Activated CD4-positive, alpha-beta memory T cell treated with anti-CD3 and anti-CD28 coated beads, Interleukin-2, amount 10 ng/mL, durations not matched to agents 7 days and 5 days (primary cell): ENCODE measurements at regions of chr2 and their contacts with region 1.

Region 1: DNA sequence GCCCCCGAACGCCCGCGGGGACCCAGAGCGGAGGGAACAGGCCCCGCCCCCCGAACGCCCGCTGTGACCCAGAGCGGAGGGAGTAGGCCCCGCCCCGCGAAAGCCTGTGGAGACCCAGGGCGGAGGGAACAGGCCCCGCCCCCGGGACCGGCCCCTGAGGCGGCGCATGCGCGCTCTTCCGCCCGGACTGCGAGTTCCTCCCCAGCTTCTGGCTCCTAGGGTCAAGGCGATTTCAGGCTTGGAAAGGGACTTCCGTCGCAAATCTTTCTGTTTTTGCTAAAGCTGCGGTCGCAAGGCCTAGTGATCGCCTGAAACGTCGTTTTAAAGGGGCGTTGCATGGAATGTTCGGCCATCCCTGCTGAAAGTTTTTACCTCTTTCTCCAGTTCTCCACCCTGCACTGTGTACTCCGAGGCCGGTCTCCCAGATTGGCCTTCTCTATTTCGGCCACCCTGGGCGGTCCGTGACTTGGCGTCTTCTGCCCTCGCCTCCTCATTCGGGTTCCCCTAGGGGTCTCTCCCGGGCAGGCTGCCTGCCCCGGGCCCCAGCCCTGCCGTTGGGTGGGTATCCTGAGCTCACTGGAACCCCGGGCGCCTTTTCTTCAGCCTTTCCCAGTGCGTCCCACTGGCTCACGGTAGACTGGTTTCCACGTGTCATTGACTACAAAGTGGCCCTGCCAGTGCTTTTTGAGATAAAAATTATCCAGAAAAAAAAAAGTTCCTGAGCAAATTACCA is 372 bp upstream of the WDSUB1 start:
- DNase-seq: peak; percentile 97
- H3K4me3 Mint-ChIP-seq: peak overlapping the region; percentile 78
- H3K27ac Mint-ChIP-seq: peak overlapping the region; percentile 52
- H3K4me1 Mint-ChIP-seq: peaks cover 23% of the 10 kb centered on the region
- H3K27me3 Mint-ChIP-seq: no peaks in the 10 kb centered on the region

Region 2: GRCh38 chr2:159201360-159202063 is 85.4 kb before region 1 on chr2:
- CTCF ChIA-PET with region 1: no interaction called
- POLR2A ChIA-PET with region 1: no interaction called
- DNase-seq: peak; percentile 22
- H3K4me3 Mint-ChIP-seq: no peak overlapping the region
- H3K27ac Mint-ChIP-seq: no peak overlapping the region
- H3K4me1 Mint-ChIP-seq: peaks cover 8% of the 10 kb centered on the region
- H3K27me3 Mint-ChIP-seq: peaks cover 2% of the 10 kb centered on the region

Region 3: GRCh38 chr2:159297042-159297695 is 10.3 kb after region 1 on chr2:
- CTCF ChIA-PET with region 1: no interaction called
- POLR2A ChIA-PET with region 1: interaction called, 11 read pairs
- DNase-seq: no peak
- H3K4me3 Mint-ChIP-seq: no peak overlapping the region
- H3K27ac Mint-ChIP-seq: no peak overlapping the region
- H3K4me1 Mint-ChIP-seq: no peaks in the 10 kb centered on the region
- H3K27me3 Mint-ChIP-seq: peaks cover 12% of the 10 kb centered on the region